ENCODE measurements at regions of chr9 and their contacts with region 1.

Region 1: DNA sequence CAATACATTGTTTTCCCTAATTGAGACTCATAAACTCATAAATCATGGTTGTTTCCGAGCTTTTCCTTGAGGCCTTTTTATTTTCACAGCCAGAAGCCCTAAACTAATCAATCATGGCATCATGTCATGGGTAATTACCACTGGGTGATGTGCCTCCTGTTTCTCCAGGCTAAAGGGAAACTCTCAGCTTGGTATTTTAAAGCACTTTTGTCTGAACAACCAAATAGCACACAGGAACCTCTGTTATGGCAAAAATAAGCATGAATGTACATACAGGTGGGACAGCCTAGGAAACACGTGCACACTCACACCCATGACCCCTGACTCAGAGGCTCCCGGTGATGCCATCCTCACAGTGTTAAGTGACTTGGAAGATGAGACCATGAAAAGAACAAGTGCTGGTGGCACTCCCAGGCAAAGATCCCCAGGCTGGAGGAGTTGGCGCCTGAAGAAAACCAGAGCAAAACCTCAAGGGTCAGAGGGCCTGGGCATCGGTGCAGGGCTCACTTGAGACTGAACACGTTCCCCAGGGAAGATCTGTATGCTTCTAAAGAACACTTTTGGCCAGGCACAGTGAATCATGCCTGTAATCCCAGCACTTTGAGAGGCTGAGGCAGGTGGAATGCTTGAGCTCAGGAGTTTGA is 154.3 kb downstream of the ROR2 start:
- DNase-seq: no peak
- ATAC-seq: no peak
- H3K4me3 ChIP-seq: no peak overlapping the region
- H3K27ac ChIP-seq: peak overlapping the region in 1 of 12 donors; percentile 64
- H3K4me1 ChIP-seq: no peaks in the 10 kb centered on the region
- H3K27me3 ChIP-seq: no peaks in the 10 kb centered on the region
- CTCF ChIP-seq: no peak
- POLR2A ChIP-seq: no peak

Region 2: DNA sequence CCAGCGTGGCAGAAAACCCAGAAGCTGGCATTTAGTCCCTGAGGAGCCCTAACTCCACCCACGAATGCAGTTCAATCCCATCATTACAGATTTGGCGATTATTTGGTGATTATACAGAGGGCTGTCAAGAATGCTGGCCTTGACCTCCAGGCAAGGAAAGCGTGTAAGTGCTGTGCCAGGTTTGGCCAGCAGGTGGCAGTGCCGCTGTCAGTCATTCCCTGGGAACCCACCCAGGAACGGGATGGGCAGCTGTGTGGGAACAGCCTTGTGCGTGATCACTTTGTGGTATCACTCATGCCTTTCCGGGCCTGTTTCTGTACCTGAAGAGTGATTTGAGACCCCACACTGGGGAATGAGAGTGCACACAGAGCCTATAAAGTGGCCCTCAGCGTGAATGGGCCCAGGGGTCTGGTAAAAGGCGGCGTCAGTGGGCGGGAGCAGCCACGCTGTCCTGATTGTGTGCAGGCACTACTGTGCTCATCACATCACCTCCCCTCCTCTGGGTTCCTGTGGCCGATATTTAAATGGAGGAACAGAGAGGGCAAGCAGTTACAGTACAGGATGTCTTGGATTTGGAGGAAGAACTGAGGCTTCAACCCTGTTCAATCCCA is 61.2 kb before region 1 on chr9:
- intact Hi-C with region 1: loop called in 1 of 10 experiments (anchors 10 kb)
- DNase-seq: peak; percentile 49 to 87 (median 71)
- ATAC-seq: peak in 3 of 4 donors; percentile 58 to 70 (median 62)
- H3K4me3 ChIP-seq: no peak overlapping the region
- H3K27ac ChIP-seq: peak overlapping the region in 1 of 12 donors; percentile 49
- H3K4me1 ChIP-seq: peaks cover 0 to 4% (median 0%) of the 10 kb centered on the region in 12 donors
- H3K27me3 ChIP-seq: peaks cover 0 to 5% (median 0%) of the 10 kb centered on the region in 9 donors
- CTCF ChIP-seq: peak; percentile 89 to 97 (median 94)
- POLR2A ChIP-seq: no peak